IMR-90 (cell line): ENCODE measurements at regions of chr1 and their contacts with region 1.

Region 1: GRCh38 chr1:15400627-15401026 is 9.1 kb upstream of the EFHD2 start:
- DNase-seq: no peak
- ATAC-seq: no peak
- H3K4me3 ChIP-seq: no peak overlapping the region
- H3K27ac ChIP-seq: no peak overlapping the region
- H3K4me1 ChIP-seq: no peaks in the 10 kb centered on the region
- H3K27me3 ChIP-seq: no peaks in the 10 kb centered on the region; the same call in 1 of the 2 replicates
- CTCF ChIP-seq: no peak
- POLR2A ChIP-seq: no peak
- RAD21 ChIP-seq: no peak

Region 2: GRCh38 chr1:14553711-14554110 is 846.9 kb before region 1 on chr1:
- CTCF ChIA-PET with region 1: no interaction called
- POLR2A ChIA-PET with region 1: no interaction called
- dilution Hi-C with region 1: no loop called
- in situ Hi-C with region 1: no loop called
- intact Hi-C with region 1: no loop called
- DNase-seq: no peak
- ATAC-seq: no peak
- H3K4me3 ChIP-seq: no peak overlapping the region
- H3K27ac ChIP-seq: no peak overlapping the region
- H3K4me1 ChIP-seq: no peaks in the 10 kb centered on the region
- H3K27me3 ChIP-seq: no peaks in the 10 kb centered on the region; the same call in 1 of the 2 replicates
- CTCF ChIP-seq: no peak
- POLR2A ChIP-seq: no peak
- RAD21 ChIP-seq: no peak

Region 3: GRCh38 chr1:15513919-15514318 is 113.3 kb after region 1 on chr1:
- CTCF ChIA-PET with region 1: no interaction called
- POLR2A ChIA-PET with region 1: interaction called, 10 read pairs
- dilution Hi-C with region 1: no loop called
- in situ Hi-C with region 1: no loop called
- intact Hi-C with region 1: no loop called
- DNase-seq: no peak
- ATAC-seq: no peak
- H3K4me3 ChIP-seq: no peak overlapping the region
- H3K27ac ChIP-seq: no peak overlapping the region
- H3K4me1 ChIP-seq: no peaks in the 10 kb centered on the region; the same call in 1 of the 2 replicates
- H3K27me3 ChIP-seq: no peaks in the 10 kb centered on the region
- CTCF ChIP-seq: no peak
- POLR2A ChIP-seq: no peak
- RAD21 ChIP-seq: no peak